Activated T-helper 2 cell treated with anti-CD3 and anti-CD28 coated beads, Interferon-gamma antibody, Interleukin-2, Interleukin-4, amounts not matched to agents 10 μg/mL and 5 μg/mL and 100 μg/mL, durations not matched to agents 14 hours and 24 hours and 36 hours (primary cell): ENCODE measurements at regions of chr6 and their contacts with region 1.

Region 1: DNA sequence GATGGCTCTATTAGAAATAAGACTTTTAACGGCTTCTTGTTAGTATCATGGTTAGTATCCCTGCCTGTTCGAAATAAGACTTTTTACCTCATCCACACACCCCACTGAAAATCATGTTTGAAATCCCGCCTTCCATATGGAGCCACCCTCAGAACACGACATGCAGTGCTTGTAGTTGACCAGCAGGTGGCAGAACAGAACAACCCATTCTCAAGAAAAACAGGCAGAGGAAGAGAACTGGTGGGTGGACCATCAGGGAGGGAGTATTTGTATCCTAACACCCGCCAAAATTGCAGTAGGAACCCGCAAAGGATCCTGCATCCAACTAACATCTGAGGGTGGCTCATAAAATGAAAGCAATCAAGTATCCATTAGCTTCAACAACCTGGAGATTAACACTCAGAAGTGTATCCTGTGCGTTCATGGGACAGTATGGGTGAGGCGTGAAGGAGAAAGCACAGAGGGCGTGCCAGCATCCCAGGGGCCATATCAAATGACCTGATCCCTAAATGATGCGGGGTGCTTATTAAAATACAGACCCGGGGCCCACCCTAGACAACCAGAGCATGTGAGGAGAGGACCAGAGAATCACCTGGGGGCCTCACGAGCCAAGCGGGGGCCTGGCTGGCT is 89.6 kb upstream of the NHSL1 start:
- DNase-seq: peak; percentile 30
- H3K4me3 Mint-ChIP-seq: no peak overlapping the region
- H3K27ac Mint-ChIP-seq: no peak overlapping the region
- H3K4me1 Mint-ChIP-seq: peaks cover 38% of the 10 kb centered on the region
- H3K27me3 Mint-ChIP-seq: peaks cover 3% of the 10 kb centered on the region

Region 2: GRCh38 chr6:138115877-138116660 is 472.9 kb before region 1 on chr6:
- intact Hi-C with region 1: loop called (anchors 5 kb)
- DNase-seq: no peak
- H3K4me3 Mint-ChIP-seq: no peak overlapping the region
- H3K27ac Mint-ChIP-seq: no peak overlapping the region
- H3K4me1 Mint-ChIP-seq: peaks cover 6% of the 10 kb centered on the region
- H3K27me3 Mint-ChIP-seq: peaks cover 38% of the 10 kb centered on the region

Region 3: GRCh38 chr6:138577151-138577915 is 11.6 kb before region 1 on chr6:
- intact Hi-C with region 1: loop called (anchors 1 kb)
- DNase-seq: no peak
- H3K4me3 Mint-ChIP-seq: no peak overlapping the region
- H3K27ac Mint-ChIP-seq: no peak overlapping the region
- H3K4me1 Mint-ChIP-seq: peaks cover 12% of the 10 kb centered on the region
- H3K27me3 Mint-ChIP-seq: peaks cover 16% of the 10 kb centered on the region

Region 4: DNA sequence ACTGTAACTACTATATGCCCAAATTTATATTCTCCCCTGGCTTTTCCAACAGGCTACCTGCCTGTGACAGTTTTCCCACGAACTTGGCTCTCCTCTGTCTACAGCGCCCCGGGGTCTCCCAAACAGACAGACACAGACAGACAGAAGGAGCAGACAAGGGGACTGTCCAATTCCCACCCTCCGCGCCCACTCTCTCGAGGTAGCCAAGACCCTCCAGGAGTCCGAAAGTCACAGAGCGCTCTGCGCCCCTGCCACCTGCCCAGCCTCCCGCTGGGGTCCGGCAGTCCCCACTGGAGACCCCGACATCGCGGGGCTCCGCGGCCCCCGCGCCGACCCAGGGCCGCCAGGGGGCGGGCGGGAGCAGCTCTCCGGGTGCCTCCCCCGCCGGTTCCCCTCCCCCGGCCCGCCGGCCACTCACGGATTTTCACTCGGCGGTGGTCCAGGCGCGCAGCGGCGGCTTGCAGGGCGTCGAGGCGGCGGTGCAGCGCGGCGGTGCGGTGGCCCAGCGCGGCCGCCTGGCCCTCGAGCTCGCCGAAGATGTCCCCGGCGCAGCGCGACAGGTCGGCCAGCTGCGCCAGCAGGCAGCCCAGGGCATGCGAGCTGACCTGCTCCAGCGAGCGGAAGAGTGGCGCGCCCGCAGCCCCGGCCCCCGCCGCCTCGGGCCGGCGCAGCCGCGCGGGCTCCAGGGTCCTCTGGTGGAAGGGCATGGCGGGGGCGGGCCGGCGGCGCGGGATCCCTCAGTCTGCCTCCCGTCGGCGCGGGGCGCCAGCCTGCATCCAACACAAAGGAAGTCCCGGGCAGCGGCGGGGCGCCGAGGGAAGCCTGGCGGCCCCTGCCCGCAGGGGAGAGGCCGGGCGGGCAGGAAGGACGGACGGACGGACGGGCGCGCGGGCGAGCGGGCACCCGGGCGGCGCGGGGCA is 103.4 kb after region 1 on chr6:
- intact Hi-C with region 1: loop called (anchors 5 kb)
- DNase-seq: peak; percentile 45
- H3K4me3 Mint-ChIP-seq: peak overlapping the region; percentile 70
- H3K27ac Mint-ChIP-seq: no peak overlapping the region
- H3K4me1 Mint-ChIP-seq: peaks cover 9% of the 10 kb centered on the region
- H3K27me3 Mint-ChIP-seq: peaks cover 57% of the 10 kb centered on the region

Region 5: GRCh38 chr6:138773177-138774091 is 184.5 kb after region 1 on chr6 and contains the start of gene CCDC28A:
- intact Hi-C with region 1: loop called (anchors 2 kb)
- DNase-seq: peak; percentile 92
- H3K4me3 Mint-ChIP-seq: peak within 1 kb of the TSS; percentile 97
- H3K27ac Mint-ChIP-seq: peak within 1 kb of the TSS; percentile 99
- H3K4me1 Mint-ChIP-seq: peaks cover 23% of the 10 kb centered on the region
- H3K27me3 Mint-ChIP-seq: no peaks in the 10 kb centered on the region
- total RNA-seq, gene CCDC28A: 18.2 and 19.2 TPM in 2 replicates

Region 6: GRCh38 chr6:139028658-139029469 is 439.9 kb after region 1 on chr6 and contains the start of gene ABRACL:
- intact Hi-C with region 1: loop called (anchors 5 kb)
- DNase-seq: peak; percentile 77
- H3K4me3 Mint-ChIP-seq: peak within 1 kb of the TSS; percentile 93
- H3K27ac Mint-ChIP-seq: peak within 1 kb of the TSS; percentile 89
- H3K4me1 Mint-ChIP-seq: peaks cover 17% of the 10 kb centered on the region
- H3K27me3 Mint-ChIP-seq: no peaks in the 10 kb centered on the region
- total RNA-seq, gene ABRACL: 151 and 161 TPM in 2 replicates

Region 7: DNA sequence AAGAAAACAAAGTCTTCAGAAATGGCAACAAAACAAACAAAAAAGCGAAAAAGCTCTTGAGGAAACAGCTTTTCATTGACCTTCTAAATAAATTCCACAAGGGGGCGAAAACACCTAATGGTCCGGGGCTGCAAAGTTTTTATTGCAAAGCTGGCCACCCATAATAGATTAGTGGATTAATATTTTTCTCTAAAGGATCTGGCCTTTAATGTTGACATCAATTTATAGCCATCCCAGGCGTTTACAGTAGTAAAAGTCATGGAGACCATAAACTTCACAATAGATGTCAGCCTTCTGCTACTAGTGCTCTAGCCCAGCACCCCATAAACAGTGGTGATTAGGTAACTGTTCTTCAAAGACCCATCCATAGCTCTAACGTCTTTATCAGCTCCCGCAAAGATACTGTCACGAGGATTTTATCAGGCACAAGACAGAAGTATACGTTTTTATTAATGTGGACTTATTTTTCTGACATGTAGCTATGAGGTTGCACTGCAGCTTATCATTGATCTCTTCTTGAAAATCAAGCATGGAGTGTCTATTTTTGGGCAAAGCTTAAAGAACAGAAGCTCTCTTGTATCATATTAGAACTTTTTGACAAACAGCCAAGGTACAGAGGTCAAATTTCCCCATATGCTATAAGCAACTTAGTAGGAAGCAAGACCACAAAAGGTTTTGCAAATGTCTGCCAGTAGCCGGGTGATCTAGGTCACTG is 780.8 kb after region 1 on chr6:
- intact Hi-C with region 1: loop called (anchors 5 kb)
- DNase-seq: no peak
- H3K4me3 Mint-ChIP-seq: no peak overlapping the region
- H3K27ac Mint-ChIP-seq: peak overlapping the region; percentile 0
- H3K4me1 Mint-ChIP-seq: peaks cover 30% of the 10 kb centered on the region
- H3K27me3 Mint-ChIP-seq: peaks cover under 1% of the 10 kb centered on the region